Activated CD8-positive, alpha-beta T cell treated with anti-CD3 and anti-CD28 coated beads, Interleukin-2, amount 10 ng/mL, durations not matched to agents 7 days and 5 days (primary cell): ENCODE measurements at regions of chr2 and their contacts with region 1.

Region 1: DNA sequence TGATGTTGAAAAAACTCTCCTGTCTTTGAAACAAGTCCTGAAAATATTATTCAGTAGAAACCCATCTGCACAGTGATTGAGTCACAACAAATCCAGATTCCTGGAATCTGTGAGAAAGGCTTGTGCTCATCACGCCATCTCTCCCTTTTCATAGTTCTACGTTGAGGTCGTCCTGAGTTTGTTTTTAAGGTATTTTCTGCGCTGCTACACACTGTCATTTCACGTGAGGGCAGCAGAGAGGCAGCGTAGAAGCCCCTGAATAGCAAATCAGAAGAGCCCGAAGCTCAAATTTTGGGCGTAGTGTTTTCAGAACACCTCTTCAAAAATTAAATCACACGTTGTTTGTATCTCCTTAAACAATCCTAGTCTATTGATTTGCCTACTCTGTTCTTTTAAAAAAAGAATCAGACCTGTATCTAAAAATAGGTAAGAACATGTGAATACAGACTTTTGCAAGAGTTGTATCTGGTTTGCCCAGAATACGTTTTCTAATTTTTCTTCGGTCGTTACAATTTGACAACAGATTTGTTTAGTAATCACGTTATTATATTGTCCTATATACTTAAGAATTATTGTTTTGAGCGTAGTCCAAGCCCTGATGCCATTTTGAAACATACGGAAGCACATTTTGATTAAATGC is 61.6 kb upstream of the SLC38A11 start:
- DNase-seq: peak; percentile 37
- ATAC-seq: peak; percentile 71
- H3K4me3 Mint-ChIP-seq: no peak overlapping the region
- H3K27ac Mint-ChIP-seq: no peak overlapping the region
- H3K4me1 Mint-ChIP-seq: no peaks in the 10 kb centered on the region
- H3K27me3 Mint-ChIP-seq: no peaks in the 10 kb centered on the region

Region 2: GRCh38 chr2:165203689-165204559 is 187.0 kb after region 1 on chr2 and contains the start of gene SCN3A:
- CTCF ChIA-PET with region 1: interaction called, 14 read pairs
- POLR2A ChIA-PET with region 1: no interaction called
- DNase-seq: peak; percentile 28
- ATAC-seq: no peak
- H3K4me3 Mint-ChIP-seq: no peak within 1 kb of the TSS
- H3K27ac Mint-ChIP-seq: no peak within 1 kb of the TSS
- H3K4me1 Mint-ChIP-seq: peaks cover 4% of the 10 kb centered on the region
- H3K27me3 Mint-ChIP-seq: no peaks in the 10 kb centered on the region
- total RNA-seq, gene SCN3A: not detected